Naive thymus-derived CD4-positive, alpha-beta T cell (primary cell): ENCODE measurements at regions of chr1 and their contacts with region 1.

Region 1: GRCh38 chr1:150925816-150926741 is at the start of gene SETDB1:
- DNase-seq: peak; percentile 69 to 93 (median 90)
- ATAC-seq: peak; percentile 98
- H3K4me3 ChIP-seq: peak within 1 kb of the TSS; percentile 92
- H3K4me3 Mint-ChIP-seq: peak within 1 kb of the TSS; percentile 92 to 97 (median 94)
- H3K27ac ChIP-seq: peak within 1 kb of the TSS; percentile 91
- H3K27ac Mint-ChIP-seq: peak within 1 kb of the TSS; percentile 92 to 99 (median 95)
- H3K4me1 ChIP-seq: peaks cover 0 to 7% of the 10 kb centered on the region in 2 donors
- H3K4me1 Mint-ChIP-seq: peaks cover 15 to 35% (median 27%) of the 10 kb centered on the region in 7 donors
- H3K27me3 ChIP-seq: no peaks in the 10 kb centered on the region
- H3K27me3 Mint-ChIP-seq: no peaks in the 10 kb centered on the region
- total RNA-seq, gene SETDB1: 57.3 to 94.9 (median 61.7) TPM

Region 2: DNA sequence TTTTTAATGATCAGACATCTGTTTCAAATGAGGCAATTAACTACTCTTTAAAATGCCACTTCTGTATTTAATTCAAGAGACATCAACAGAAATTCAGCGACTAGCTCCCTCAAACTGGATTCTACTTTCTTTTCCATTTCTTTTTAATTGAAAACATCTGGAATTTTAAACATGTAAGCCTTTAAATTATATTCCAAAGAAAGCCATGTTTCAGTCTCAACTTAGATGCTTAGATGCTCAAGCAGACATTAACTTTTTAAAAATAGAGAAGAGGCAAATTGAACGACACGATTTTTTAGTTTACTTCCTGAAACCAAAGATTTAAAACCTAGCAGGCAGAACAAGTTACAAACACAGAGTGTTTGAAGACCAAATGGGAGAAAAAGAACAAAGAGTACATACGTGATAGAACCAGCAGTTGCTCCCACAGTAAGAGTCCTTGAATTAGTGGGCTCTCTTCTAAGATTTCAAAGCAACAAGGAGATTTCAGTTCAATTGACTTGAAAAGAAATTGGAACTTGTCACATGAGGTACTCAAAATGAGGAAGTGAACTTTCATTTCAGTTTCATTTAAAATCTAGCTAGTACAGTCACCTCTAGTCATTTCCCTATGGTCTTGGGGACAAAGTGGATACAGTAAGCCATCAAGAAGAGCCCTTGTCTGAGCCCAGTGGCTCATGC is 160.6 kb before region 1 on chr1 and contains the start of gene CTSS:
- CTCF ChIA-PET with region 1: interaction called, 4 read pairs
- POLR2A ChIA-PET with region 1: no interaction called
- intact Hi-C with region 1: loop called (anchors 1 to 2 kb)
- DNase-seq: peak in 6 of 9 donors; percentile 37 to 55 (median 43)
- ATAC-seq: peak; percentile 86
- H3K4me3 ChIP-seq: peak within 1 kb of the TSS; percentile 60
- H3K4me3 Mint-ChIP-seq: peak within 1 kb of the TSS; percentile 87 to 98 (median 93)
- H3K27ac ChIP-seq: peak within 1 kb of the TSS; percentile 82
- H3K27ac Mint-ChIP-seq: peak within 1 kb of the TSS; percentile 83 to 99 (median 96)
- H3K4me1 ChIP-seq: peaks cover 9 to 15% of the 10 kb centered on the region in 2 donors
- H3K4me1 Mint-ChIP-seq: peaks cover 36 to 68% (median 52%) of the 10 kb centered on the region in 7 donors
- H3K27me3 ChIP-seq: no peaks in the 10 kb centered on the region
- H3K27me3 Mint-ChIP-seq: peaks cover 0 to 8% (median 0%) of the 10 kb centered on the region in 5 donors
- total RNA-seq, gene CTSS: 91.1 to 1,020 (median 106) TPM

Region 3: GRCh38 chr1:150841626-150842025 is 84.5 kb before region 1 on chr1:
- CTCF ChIA-PET with region 1: interaction called, 3 read pairs
- POLR2A ChIA-PET with region 1: no interaction called
- intact Hi-C with region 1: loop called (anchors 1 kb)
- DNase-seq: peak in 7 of 9 donors; percentile 54 to 82 (median 70)
- ATAC-seq: peak; percentile 93
- H3K4me3 ChIP-seq: no peak overlapping the region
- H3K4me3 Mint-ChIP-seq: peak overlapping the region in 9 of 10 donors; percentile 10 to 66 (median 49)
- H3K27ac ChIP-seq: peak overlapping the region; percentile 63
- H3K27ac Mint-ChIP-seq: peak overlapping the region; percentile 49 to 94 (median 86)
- H3K4me1 ChIP-seq: peaks cover 0 to 29% of the 10 kb centered on the region in 2 donors
- H3K4me1 Mint-ChIP-seq: peaks cover 27 to 57% (median 49%) of the 10 kb centered on the region in 7 donors
- H3K27me3 ChIP-seq: no peaks in the 10 kb centered on the region
- H3K27me3 Mint-ChIP-seq: no peaks in the 10 kb centered on the region

Region 4: DNA sequence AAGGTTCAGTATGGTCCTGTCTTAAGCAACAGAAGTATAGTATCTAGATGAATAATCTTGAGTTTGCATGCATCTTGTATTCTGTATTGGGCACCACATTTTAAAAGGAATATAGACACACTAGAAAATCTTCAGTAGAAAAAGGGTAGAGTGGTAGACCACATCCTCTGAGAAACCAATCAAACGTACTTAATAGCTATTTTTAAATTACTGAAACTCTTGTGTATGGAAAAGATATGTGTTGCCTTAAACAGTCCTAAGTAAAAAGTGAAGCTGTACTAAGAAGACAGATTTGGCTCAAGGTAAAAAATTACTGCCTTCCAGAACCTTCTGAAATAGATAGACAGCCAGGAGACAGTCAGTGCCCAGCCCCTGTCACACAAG is 36.1 kb before region 1 on chr1:
- CTCF ChIA-PET with region 1: interaction called, 4 read pairs
- POLR2A ChIA-PET with region 1: no interaction called
- intact Hi-C with region 1: loop called in 1 of 2 experiments (anchors 2 kb)
- DNase-seq: peak in 6 of 9 donors; percentile 28 to 62 (median 56)
- ATAC-seq: peak; percentile 61
- H3K4me3 ChIP-seq: peak overlapping the region; percentile 5
- H3K4me3 Mint-ChIP-seq: peak overlapping the region; percentile 10 to 81 (median 64)
- H3K27ac ChIP-seq: no peak overlapping the region
- H3K27ac Mint-ChIP-seq: peak overlapping the region in 5 of 9 donors; percentile 2 to 55 (median 42)
- H3K4me1 ChIP-seq: peaks cover 11 to 16% of the 10 kb centered on the region in 2 donors
- H3K4me1 Mint-ChIP-seq: peaks cover 16 to 34% (median 29%) of the 10 kb centered on the region in 7 donors
- H3K27me3 ChIP-seq: no peaks in the 10 kb centered on the region
- H3K27me3 Mint-ChIP-seq: peaks cover 0 to 6% (median 0%) of the 10 kb centered on the region in 5 donors